BJ (cell line): ENCODE measurements at regions of chr3 and their contacts with region 1.

Region 1: GRCh38 chr3:16528581-16528993 is 15.1 kb upstream of the RFTN1 start:
- DNase-seq: no peak
- H3K4me3 ChIP-seq: no peak overlapping the region
- H3K27me3 ChIP-seq: peaks cover 19% of the 10 kb centered on the region
- CTCF ChIP-seq: no peak

Region 2: GRCh38 chr3:16516695-16517481 is 11.7 kb before region 1 on chr3:
- CTCF ChIA-PET with region 1: interaction called, 22 read pairs
- POLR2A ChIA-PET with region 1: no interaction called
- DNase-seq: no peak
- H3K4me3 ChIP-seq: no peak overlapping the region
- H3K27me3 ChIP-seq: peaks cover 3% of the 10 kb centered on the region
- CTCF ChIP-seq: peak; percentile 77

Region 3: GRCh38 chr3:16658004-16658920 is 129.7 kb after region 1 on chr3:
- CTCF ChIA-PET with region 1: no interaction called
- POLR2A ChIA-PET with region 1: no interaction called
- DNase-seq: no peak
- H3K4me3 ChIP-seq: no peak overlapping the region
- H3K27me3 ChIP-seq: no peaks in the 10 kb centered on the region
- CTCF ChIP-seq: peak; percentile 16; the same call in 1 of the 2 replicates

Region 4: DNA sequence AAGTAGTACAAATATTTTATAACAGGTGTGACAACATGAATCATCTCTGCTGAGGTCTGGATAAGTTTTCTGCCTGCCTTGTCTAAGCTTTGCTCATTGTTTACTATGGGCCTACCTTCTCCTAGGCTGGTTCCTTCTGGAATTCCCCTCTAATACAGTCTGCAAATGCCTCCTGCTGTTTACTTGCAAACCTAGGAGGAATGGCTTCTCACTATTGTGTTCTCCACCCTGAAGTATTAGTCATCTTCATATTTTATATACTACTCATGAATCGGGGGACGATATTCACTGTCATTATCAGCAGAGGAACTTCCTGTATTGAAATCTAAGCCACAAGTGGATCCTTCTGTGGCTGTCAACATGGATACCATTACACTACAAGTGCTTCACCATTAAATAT is 511.0 kb after region 1 on chr3:
- CTCF ChIA-PET with region 1: no interaction called
- POLR2A ChIA-PET with region 1: no interaction called
- DNase-seq: peak; percentile 79
- H3K4me3 ChIP-seq: no peak overlapping the region
- H3K27me3 ChIP-seq: no peaks in the 10 kb centered on the region
- CTCF ChIP-seq: peak; percentile 19; the same call in 1 of the 2 replicates